Naive thymus-derived CD4-positive, alpha-beta T cell (primary cell): ENCODE measurements at regions of chr12 and their contacts with region 1.

Region 1: GRCh38 chr12:751192-751998 is 984 bp upstream of the WNK1 start:
- DNase-seq: peak; percentile 52 to 84 (median 75)
- ATAC-seq: peak; percentile 46
- H3K4me3 ChIP-seq: peak overlapping the region; percentile 71
- H3K4me3 Mint-ChIP-seq: no peak overlapping the region
- H3K27ac ChIP-seq: peak overlapping the region; percentile 98
- H3K27ac Mint-ChIP-seq: no peak overlapping the region
- H3K4me1 ChIP-seq: peaks cover 18 to 29% of the 10 kb centered on the region in 2 donors
- H3K4me1 Mint-ChIP-seq: peaks cover 12 to 21% (median 15%) of the 10 kb centered on the region in 7 donors
- H3K27me3 ChIP-seq: no peaks in the 10 kb centered on the region
- H3K27me3 Mint-ChIP-seq: no peaks in the 10 kb centered on the region

Region 2: GRCh38 chr12:269191-269590 is 482.2 kb before region 1 on chr12:
- CTCF ChIA-PET with region 1: no interaction called
- POLR2A ChIA-PET with region 1: no interaction called
- intact Hi-C with region 1: no loop called
- DNase-seq: no peak
- ATAC-seq: no peak
- H3K4me3 ChIP-seq: no peak overlapping the region
- H3K4me3 Mint-ChIP-seq: no peak overlapping the region
- H3K27ac ChIP-seq: no peak overlapping the region
- H3K27ac Mint-ChIP-seq: peak overlapping the region in 2 of 9 donors; percentile 19
- H3K4me1 ChIP-seq: peaks cover 0 to 4% of the 10 kb centered on the region in 2 donors
- H3K4me1 Mint-ChIP-seq: peaks cover 0 to 19% (median 11%) of the 10 kb centered on the region in 7 donors
- H3K27me3 ChIP-seq: no peaks in the 10 kb centered on the region
- H3K27me3 Mint-ChIP-seq: peaks cover 0 to 8% (median 0%) of the 10 kb centered on the region in 5 donors

Region 3: GRCh38 chr12:401235-402028 is 350.0 kb before region 1 on chr12 and contains the start of gene CCDC77:
- CTCF ChIA-PET with region 1: no interaction called
- POLR2A ChIA-PET with region 1: no interaction called
- intact Hi-C with region 1: loop called (anchors 1 kb)
- DNase-seq: peak; percentile 91 to 97 (median 95)
- ATAC-seq: peak; percentile 100
- H3K4me3 ChIP-seq: peak within 1 kb of the TSS; percentile 94
- H3K4me3 Mint-ChIP-seq: no peak within 1 kb of the TSS
- H3K27ac ChIP-seq: peak within 1 kb of the TSS; percentile 71
- H3K27ac Mint-ChIP-seq: peak within 1 kb of the TSS in 1 of 9 donors; percentile 62
- H3K4me1 ChIP-seq: peaks cover 4 to 13% of the 10 kb centered on the region in 2 donors
- H3K4me1 Mint-ChIP-seq: peaks cover 0 to 9% (median 5%) of the 10 kb centered on the region in 7 donors
- H3K27me3 ChIP-seq: no peaks in the 10 kb centered on the region
- H3K27me3 Mint-ChIP-seq: no peaks in the 10 kb centered on the region
- total RNA-seq, gene CCDC77: 9.7 to 15.6 (median 12.7) TPM

Region 4: GRCh38 chr12:614411-614970 is 136.9 kb before region 1 on chr12:
- CTCF ChIA-PET with region 1: interaction called, 29 read pairs
- POLR2A ChIA-PET with region 1: interaction called, 6 read pairs
- intact Hi-C with region 1: loop called (anchors 1 to 2 kb)
- DNase-seq: peak in 4 of 9 donors; percentile 16 to 40 (median 32)
- ATAC-seq: peak; percentile 30
- H3K4me3 ChIP-seq: no peak overlapping the region
- H3K4me3 Mint-ChIP-seq: no peak overlapping the region
- H3K27ac ChIP-seq: no peak overlapping the region
- H3K27ac Mint-ChIP-seq: peak overlapping the region in 5 of 9 donors; percentile 30 to 70 (median 51)
- H3K4me1 ChIP-seq: peaks cover 6 to 19% of the 10 kb centered on the region in 2 donors
- H3K4me1 Mint-ChIP-seq: peaks cover 29 to 56% (median 43%) of the 10 kb centered on the region in 7 donors
- H3K27me3 ChIP-seq: no peaks in the 10 kb centered on the region
- H3K27me3 Mint-ChIP-seq: no peaks in the 10 kb centered on the region

Region 5: GRCh38 chr12:674272-674781 is 77.1 kb before region 1 on chr12:
- CTCF ChIA-PET with region 1: interaction called, 14 read pairs
- POLR2A ChIA-PET with region 1: interaction called, 28 read pairs
- intact Hi-C with region 1: loop called (anchors 1 kb)
- DNase-seq: peak in 8 of 9 donors; percentile 54 to 84 (median 74)
- ATAC-seq: peak; percentile 95
- H3K4me3 ChIP-seq: peak overlapping the region; percentile 5
- H3K4me3 Mint-ChIP-seq: peak overlapping the region; percentile 31 to 80 (median 69)
- H3K27ac ChIP-seq: peak overlapping the region; percentile 58
- H3K27ac Mint-ChIP-seq: peak overlapping the region; percentile 71 to 96 (median 89)
- H3K4me1 ChIP-seq: peaks cover 31 to 49% of the 10 kb centered on the region in 2 donors
- H3K4me1 Mint-ChIP-seq: peaks cover 28 to 65% (median 51%) of the 10 kb centered on the region in 7 donors
- H3K27me3 ChIP-seq: no peaks in the 10 kb centered on the region
- H3K27me3 Mint-ChIP-seq: no peaks in the 10 kb centered on the region

Region 6: DNA sequence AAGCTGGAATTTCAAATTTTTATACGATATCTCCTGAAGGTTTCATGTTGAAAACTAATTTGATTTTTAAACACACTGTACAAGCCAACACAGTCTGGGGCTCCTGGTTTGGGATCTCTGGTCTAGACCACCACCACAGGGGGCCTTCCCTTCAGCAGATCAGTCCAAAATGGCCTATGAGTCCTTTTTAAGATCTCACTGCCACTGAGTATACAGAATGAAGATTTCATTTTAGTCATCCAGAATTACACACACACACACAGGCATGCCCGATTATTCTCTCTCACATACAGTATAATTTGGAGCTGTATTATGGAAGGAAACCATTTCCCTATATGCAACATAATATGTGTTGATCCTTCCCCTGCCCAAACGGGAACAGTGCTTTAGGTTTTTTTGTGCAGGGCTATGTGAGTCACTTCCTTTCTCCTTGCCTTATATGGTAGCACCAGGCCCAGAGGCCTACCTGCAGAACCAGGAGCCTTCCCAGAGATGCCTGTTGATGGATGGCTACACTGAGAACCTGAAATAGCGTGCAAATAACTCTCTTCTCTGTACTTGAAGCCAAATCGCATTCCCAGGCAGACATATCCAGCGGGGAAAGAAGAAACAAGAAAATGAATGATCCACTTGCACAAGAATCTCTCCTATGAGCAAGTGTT is 27.1 kb before region 1 on chr12:
- CTCF ChIA-PET with region 1: interaction called, 70 read pairs
- POLR2A ChIA-PET with region 1: interaction called, 153 read pairs
- intact Hi-C with region 1: loop called (anchors 1 to 2 kb)
- DNase-seq: peak in 1 of 9 donors; percentile 31
- ATAC-seq: peak; percentile 69
- H3K4me3 ChIP-seq: no peak overlapping the region
- H3K4me3 Mint-ChIP-seq: peak overlapping the region; percentile 1 to 56 (median 40)
- H3K27ac ChIP-seq: no peak overlapping the region
- H3K27ac Mint-ChIP-seq: peak overlapping the region; percentile 67 to 95 (median 89)
- H3K4me1 ChIP-seq: peaks cover 26 to 68% of the 10 kb centered on the region in 2 donors
- H3K4me1 Mint-ChIP-seq: peaks cover 37 to 96% (median 89%) of the 10 kb centered on the region in 7 donors
- H3K27me3 ChIP-seq: no peaks in the 10 kb centered on the region
- H3K27me3 Mint-ChIP-seq: no peaks in the 10 kb centered on the region

Region 7: DNA sequence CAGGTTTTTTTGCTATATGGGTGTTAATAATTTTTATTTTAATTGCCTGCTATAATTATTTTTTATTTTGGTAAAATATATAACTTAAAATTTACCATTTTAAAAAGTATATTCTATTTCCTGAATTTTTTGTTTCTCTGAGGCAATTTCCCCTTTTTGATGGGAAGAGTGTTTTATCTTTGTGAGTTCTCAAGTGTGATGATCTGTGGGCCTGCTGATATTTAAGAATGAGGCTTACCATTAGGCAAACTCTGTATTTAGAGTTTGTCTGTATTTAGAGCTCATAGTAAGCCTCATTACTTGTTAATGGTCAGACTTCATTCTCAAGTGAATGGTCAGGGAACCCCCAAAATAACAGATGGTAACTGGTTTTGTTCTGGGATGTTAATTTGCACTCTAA is 49.0 kb after region 1 on chr12:
- CTCF ChIA-PET with region 1: no interaction called
- POLR2A ChIA-PET with region 1: no interaction called
- intact Hi-C with region 1: no loop called
- DNase-seq: no peak
- ATAC-seq: no peak
- H3K4me3 ChIP-seq: no peak overlapping the region
- H3K4me3 Mint-ChIP-seq: peak overlapping the region in 3 of 10 donors; percentile 30 to 47 (median 38)
- H3K27ac ChIP-seq: no peak overlapping the region
- H3K27ac Mint-ChIP-seq: peak overlapping the region in 5 of 9 donors; percentile 12 to 68 (median 60)
- H3K4me1 ChIP-seq: peaks cover 21 to 42% of the 10 kb centered on the region in 2 donors
- H3K4me1 Mint-ChIP-seq: peaks cover 46 to 88% (median 80%) of the 10 kb centered on the region in 7 donors
- H3K27me3 ChIP-seq: no peaks in the 10 kb centered on the region
- H3K27me3 Mint-ChIP-seq: no peaks in the 10 kb centered on the region

Region 8: GRCh38 chr12:810671-811415 is 59.4 kb after region 1 on chr12:
- CTCF ChIA-PET with region 1: interaction called, 11 read pairs
- POLR2A ChIA-PET with region 1: interaction called, 11 read pairs
- intact Hi-C with region 1: loop called (anchors 1 to 2 kb)
- DNase-seq: peak in 1 of 9 donors; percentile 47
- ATAC-seq: no peak
- H3K4me3 ChIP-seq: no peak overlapping the region
- H3K4me3 Mint-ChIP-seq: peak overlapping the region in 6 of 10 donors; percentile 0 to 49 (median 26)
- H3K27ac ChIP-seq: peak overlapping the region; percentile 25
- H3K27ac Mint-ChIP-seq: peak overlapping the region; percentile 11 to 78 (median 64)
- H3K4me1 ChIP-seq: peaks cover 29 to 50% of the 10 kb centered on the region in 2 donors
- H3K4me1 Mint-ChIP-seq: peaks cover 44 to 84% (median 74%) of the 10 kb centered on the region in 7 donors
- H3K27me3 ChIP-seq: no peaks in the 10 kb centered on the region
- H3K27me3 Mint-ChIP-seq: no peaks in the 10 kb centered on the region